HepG2 (cell line): ENCODE measurements at regions of chr1 and their contacts with region 1.

Region 1: DNA sequence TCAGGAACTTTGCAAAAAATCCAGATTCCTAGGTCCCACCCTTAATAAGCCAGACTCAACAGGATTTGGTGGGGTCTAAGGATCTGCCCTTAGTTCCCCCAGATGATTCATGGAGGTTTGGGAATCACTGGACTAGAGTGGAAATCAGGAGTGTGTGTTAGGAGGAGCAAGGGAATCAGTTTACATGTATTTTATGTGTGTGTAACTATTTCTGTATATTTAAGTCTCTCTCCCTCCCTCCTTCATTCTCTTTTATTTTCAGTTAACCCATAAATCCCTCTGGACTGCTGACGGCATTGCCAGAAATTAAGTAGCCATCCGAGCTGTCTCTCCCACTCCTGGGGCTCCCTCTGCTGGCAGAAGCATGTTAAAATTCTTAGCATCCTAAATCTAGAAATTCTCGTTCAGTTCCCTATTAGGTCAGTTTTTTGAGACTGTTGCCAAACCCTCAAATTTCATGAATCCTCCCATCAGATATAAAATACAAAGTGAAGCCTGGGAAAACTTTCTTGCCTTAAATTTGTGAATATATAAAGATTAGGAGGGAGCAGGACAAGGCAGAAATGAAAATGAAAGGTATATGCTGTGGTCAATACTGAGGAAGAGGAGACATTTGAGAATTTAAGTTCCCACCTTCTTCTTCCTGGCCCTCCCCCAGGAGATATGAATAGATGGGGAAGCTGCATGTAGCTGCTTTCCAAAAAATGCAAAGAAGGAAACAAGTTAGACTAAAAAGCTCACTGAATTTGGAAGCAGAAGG is 11.7 kb upstream of the HSD11B1 start:
- DNase-seq: peak; percentile 54
- ATAC-seq: peak; percentile 63
- H3K4me3 ChIP-seq: no peak overlapping the region
- H3K27ac ChIP-seq: no peak overlapping the region
- H3K4me1 ChIP-seq: no peaks in the 10 kb centered on the region
- H3K27me3 ChIP-seq: no peaks in the 10 kb centered on the region
- CTCF ChIP-seq: peak; percentile 80
- EP300 ChIP-seq: no peak
- POLR2A ChIP-seq: no peak
- RAD21 ChIP-seq: peak; percentile 51; the same call in 1 of the 2 replicates

Region 2: GRCh38 chr1:209565759-209566678 is 126.9 kb before region 1 on chr1:
- CTCF ChIA-PET with region 1: interaction called, 13 read pairs
- POLR2A ChIA-PET with region 1: no interaction called
- in situ Hi-C with region 1: no loop called
- intact Hi-C with region 1: loop called (anchors 2 kb)
- DNase-seq: peak; percentile 68
- ATAC-seq: peak; percentile 97
- H3K4me3 ChIP-seq: no peak overlapping the region
- H3K27ac ChIP-seq: no peak overlapping the region
- H3K4me1 ChIP-seq: no peaks in the 10 kb centered on the region
- H3K27me3 ChIP-seq: no peaks in the 10 kb centered on the region; a peak in 1 of 5 replicates
- CTCF ChIP-seq: peak; percentile 77
- EP300 ChIP-seq: no peak
- POLR2A ChIP-seq: no peak
- RAD21 ChIP-seq: no peak

Region 3: DNA sequence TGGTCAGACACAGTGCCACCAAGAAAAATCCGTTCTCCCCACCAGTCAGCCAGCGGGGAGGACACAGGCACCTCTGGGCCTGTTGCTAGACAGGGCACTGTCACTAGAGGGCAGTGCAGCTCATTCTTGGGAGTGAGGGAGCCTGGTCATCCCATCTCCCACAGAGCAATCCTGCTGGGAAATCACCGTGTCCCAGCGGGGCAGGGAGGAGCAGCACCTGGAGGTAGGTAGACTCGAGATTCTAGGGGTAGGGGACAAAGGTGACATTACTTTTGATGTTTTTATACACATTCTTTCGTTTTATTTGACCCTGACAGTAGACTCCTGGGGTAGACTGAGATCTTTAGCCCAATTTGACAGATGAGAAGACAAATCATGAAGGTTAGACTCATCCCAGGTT is 116.1 kb before region 1 on chr1:
- CTCF ChIA-PET with region 1: interaction called, 16 read pairs
- POLR2A ChIA-PET with region 1: no interaction called
- in situ Hi-C with region 1: loop called (anchors 5 kb)
- intact Hi-C with region 1: loop called (anchors 1 kb)
- DNase-seq: peak; percentile 44
- ATAC-seq: peak; percentile 100
- H3K4me3 ChIP-seq: no peak overlapping the region
- H3K27ac ChIP-seq: no peak overlapping the region
- H3K4me1 ChIP-seq: no peaks in the 10 kb centered on the region
- H3K27me3 ChIP-seq: no peaks in the 10 kb centered on the region
- CTCF ChIP-seq: peak; percentile 91
- EP300 ChIP-seq: no peak
- POLR2A ChIP-seq: no peak
- RAD21 ChIP-seq: no peak

Region 4: DNA sequence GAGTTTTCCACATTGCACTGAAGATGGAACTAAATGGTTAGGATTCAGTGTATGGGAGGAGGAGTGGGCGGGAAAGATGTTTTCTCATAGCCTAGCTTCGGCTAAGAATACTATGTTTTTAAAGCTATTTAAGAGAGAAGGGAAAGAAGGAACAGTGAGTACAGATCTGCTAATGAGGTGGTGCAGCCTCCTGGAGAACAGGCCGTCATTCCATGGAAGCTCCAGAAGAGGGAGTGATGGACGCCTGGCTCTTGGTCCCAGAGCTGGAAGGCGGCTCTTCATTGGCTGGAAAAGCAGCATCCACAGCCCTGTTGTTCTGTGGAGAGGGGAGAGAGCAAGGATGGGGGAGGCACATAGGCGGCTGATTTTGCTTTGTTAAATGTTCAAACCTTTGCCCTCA is 102.5 kb before region 1 on chr1:
- CTCF ChIA-PET with region 1: interaction called, 5 read pairs
- POLR2A ChIA-PET with region 1: no interaction called
- in situ Hi-C with region 1: no loop called
- intact Hi-C with region 1: loop called (anchors 1 kb)
- DNase-seq: peak; percentile 19
- ATAC-seq: peak; percentile 97
- H3K4me3 ChIP-seq: no peak overlapping the region
- H3K27ac ChIP-seq: no peak overlapping the region
- H3K4me1 ChIP-seq: no peaks in the 10 kb centered on the region
- H3K27me3 ChIP-seq: peaks cover 0 to 5% of the 10 kb centered on the region in 2 experiments; a peak in 1 of 5 replicates
- CTCF ChIP-seq: peak; percentile 55
- EP300 ChIP-seq: no peak
- POLR2A ChIP-seq: no peak
- RAD21 ChIP-seq: peak; percentile 29; the same call in 1 of the 2 replicates

Region 5: DNA sequence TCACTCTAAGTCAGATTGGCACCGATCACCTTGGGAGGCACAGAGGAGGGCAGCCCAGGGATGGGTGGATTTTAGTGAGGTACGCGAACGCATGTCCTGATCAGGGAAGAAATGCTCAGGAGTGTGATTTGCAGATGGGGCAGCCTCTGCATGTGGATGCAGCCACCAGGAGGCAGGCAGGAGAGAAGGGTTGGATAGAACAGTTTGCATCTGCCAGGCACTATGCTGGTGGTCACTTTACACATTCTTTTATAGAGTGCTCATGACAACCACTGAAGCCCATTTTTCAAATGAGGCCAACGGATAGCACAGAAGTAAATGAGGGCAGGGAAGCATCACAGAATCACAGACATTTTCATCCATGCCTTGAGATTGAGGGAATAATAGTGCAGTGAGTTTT is 46.4 kb before region 1 on chr1:
- CTCF ChIA-PET with region 1: interaction called, 4 read pairs
- POLR2A ChIA-PET with region 1: no interaction called
- in situ Hi-C with region 1: no loop called
- intact Hi-C with region 1: loop called (anchors 1 kb)
- DNase-seq: no peak
- ATAC-seq: peak; percentile 72
- H3K4me3 ChIP-seq: no peak overlapping the region
- H3K27ac ChIP-seq: no peak overlapping the region
- H3K4me1 ChIP-seq: no peaks in the 10 kb centered on the region
- H3K27me3 ChIP-seq: no peaks in the 10 kb centered on the region; a peak in 1 of 5 replicates
- CTCF ChIP-seq: peak; percentile 16; the same call in 1 of the 2 replicates
- EP300 ChIP-seq: no peak
- POLR2A ChIP-seq: no peak
- RAD21 ChIP-seq: no peak